ENCODE measurements at regions of chr3 and their contacts with region 1.

Region 1: DNA sequence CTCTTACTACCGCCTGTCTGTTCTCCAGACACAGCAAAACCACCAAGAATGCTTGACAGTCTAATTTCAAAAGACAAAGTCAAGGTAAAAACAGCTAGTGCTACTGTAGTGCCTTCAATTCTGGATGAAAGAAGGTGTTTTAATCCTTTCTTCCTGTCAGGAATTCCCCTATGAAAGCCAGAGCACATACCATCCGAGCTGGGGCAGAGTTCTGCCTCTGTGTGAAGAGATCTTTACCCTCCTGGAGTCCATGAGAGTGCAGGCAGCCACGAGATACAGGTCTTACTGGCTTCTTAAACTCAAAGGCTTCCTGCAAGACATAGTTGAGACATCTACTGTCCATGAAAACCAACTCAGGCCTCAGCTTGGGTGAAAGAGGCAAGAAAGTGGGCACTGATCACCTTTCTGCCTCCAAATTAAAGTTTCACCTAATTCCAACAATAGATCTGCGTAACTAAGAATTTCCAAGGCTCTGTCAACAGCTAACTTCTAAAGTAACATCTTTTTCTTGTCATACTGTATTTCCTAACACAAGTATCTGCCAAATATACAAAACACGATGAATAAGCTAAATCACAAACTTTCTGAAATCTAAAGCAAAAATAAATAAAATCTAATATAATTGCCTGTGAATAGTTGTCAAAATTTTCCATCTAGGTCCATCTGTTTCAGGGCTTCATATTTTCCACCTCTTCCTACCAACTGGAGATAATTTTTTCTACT is 7.5 kb downstream of the CDC25A start:
- DNase-seq: no peak
- ATAC-seq: no peak
- H3K4me3 Mint-ChIP-seq: no peak overlapping the region
- H3K27ac Mint-ChIP-seq: no peak overlapping the region; the same call in 1 of the 2 replicates
- H3K4me1 Mint-ChIP-seq: peaks cover 2% of the 10 kb centered on the region
- H3K27me3 Mint-ChIP-seq: no peaks in the 10 kb centered on the region
- CTCF ChIP-seq: no peak

Region 2: DNA sequence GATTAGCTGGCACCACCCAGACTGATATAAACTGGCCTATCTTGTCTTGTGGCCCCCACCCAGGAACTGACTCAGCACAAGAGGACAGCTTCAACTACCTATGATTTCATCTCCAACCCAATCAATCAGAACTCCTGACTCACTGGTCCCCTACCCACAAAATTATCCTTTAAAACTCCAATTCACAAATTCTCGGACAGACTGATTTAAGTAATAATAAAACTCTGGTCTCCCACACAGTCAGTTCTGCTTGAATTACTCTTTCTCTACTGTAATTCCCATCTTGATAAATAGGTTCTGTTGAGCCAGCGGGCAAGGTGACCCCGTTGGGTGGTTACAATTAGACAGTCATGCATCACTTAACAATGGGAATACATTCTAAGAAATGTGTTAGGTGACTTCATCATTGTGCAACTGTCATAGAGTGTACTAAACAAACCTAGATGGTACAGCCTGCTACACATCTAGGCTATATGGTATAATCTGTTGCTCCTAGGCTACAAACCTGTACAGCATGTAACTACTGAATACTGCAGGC is 116.3 kb before region 1 on chr3:
- CTCF ChIA-PET with region 1: no interaction called
- POLR2A ChIA-PET with region 1: no interaction called
- DNase-seq: no peak
- ATAC-seq: no peak
- H3K4me3 Mint-ChIP-seq: no peak overlapping the region
- H3K27ac Mint-ChIP-seq: peak overlapping the region; percentile 72
- H3K4me1 Mint-ChIP-seq: 0 out of 2 replicates have a peak, but pooled peaks cover 3% of the 10 kb centered on the region
- H3K27me3 Mint-ChIP-seq: no peaks in the 10 kb centered on the region
- CTCF ChIP-seq: no peak

Region 3: GRCh38 chr3:49609314-49609713 is 1428.6 kb after region 1 on chr3:
- CTCF ChIA-PET with region 1: no interaction called
- POLR2A ChIA-PET with region 1: interaction called, 13 read pairs
- DNase-seq: no peak
- ATAC-seq: no peak
- H3K4me3 Mint-ChIP-seq: no peak overlapping the region
- H3K27ac Mint-ChIP-seq: no peak overlapping the region
- H3K4me1 Mint-ChIP-seq: no peaks in the 10 kb centered on the region
- H3K27me3 Mint-ChIP-seq: no peaks in the 10 kb centered on the region
- CTCF ChIP-seq: no peak

Measured in WTC11 (cell line).